ENCODE measurements at regions of chr20 and their contacts with region 1.

Region 1: GRCh38 chr20:58980700-58981627 is at the start of gene NELFCD:
- DNase-seq: peak; percentile 92
- H3K4me3 ChIP-seq: peak within 1 kb of the TSS; percentile 50 to 91 (median 79)
- H3K27ac ChIP-seq: peak within 1 kb of the TSS; percentile 80 to 88 (median 82)
- H3K4me1 ChIP-seq: peaks cover 0 to 38% (median 32%) of the 10 kb centered on the region in 4 donors
- H3K27me3 ChIP-seq: no peaks in the 10 kb centered on the region
- CTCF ChIP-seq: no peak
- EP300 ChIP-seq: no peak
- POLR2A ChIP-seq: peak in 1 of 2 donors; percentile 13
- total RNA-seq, gene NELFCD: 36.3 to 53.2 (median 43.7) TPM

Region 2: GRCh38 chr20:58790454-58790853 is 190.5 kb before region 1 on chr20:
- intact Hi-C with region 1: no loop called
- DNase-seq: no peak
- H3K4me3 ChIP-seq: no peak overlapping the region
- H3K27ac ChIP-seq: no peak overlapping the region
- H3K4me1 ChIP-seq: no peaks in the 10 kb centered on the region
- H3K27me3 ChIP-seq: peaks cover 0 to 21% (median 0%) of the 10 kb centered on the region in 3 donors
- CTCF ChIP-seq: no peak
- EP300 ChIP-seq: no peak
- POLR2A ChIP-seq: no peak

Region 3: DNA sequence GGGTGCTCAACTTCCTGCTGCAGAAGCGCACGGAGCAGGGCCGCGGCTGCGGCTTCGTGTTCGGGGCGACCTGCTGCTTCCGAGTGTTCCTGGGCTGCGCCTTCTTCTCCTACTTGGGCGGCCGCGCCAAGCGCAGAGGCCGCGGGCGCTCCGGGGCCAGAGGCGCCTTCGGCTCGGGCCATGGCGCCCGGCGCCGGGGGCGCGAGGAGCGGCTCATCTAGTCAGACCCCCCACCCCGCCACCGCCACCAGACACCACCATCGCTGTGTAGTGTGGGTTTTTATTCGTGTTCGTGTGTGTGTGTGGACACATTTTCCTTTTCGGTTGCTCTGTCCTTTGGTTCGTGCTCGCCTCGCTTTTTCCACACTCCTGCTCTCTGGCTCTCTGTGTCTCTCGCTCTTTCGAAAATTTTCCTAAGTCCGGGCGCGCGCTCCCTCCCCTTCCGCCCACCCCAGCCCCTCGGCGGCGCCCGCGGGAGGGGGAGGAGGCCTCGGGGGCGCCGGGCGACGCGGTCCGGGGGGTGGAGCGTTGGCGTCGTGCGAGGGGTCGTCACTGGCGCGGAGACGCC is 90.4 kb before region 1 on chr20:
- intact Hi-C with region 1: loop called (anchors 2 kb)
- DNase-seq: peak; percentile 92
- H3K4me3 ChIP-seq: peak overlapping the region; percentile 40 to 93 (median 87)
- H3K27ac ChIP-seq: peak overlapping the region; percentile 98 to 100 (median 99)
- H3K4me1 ChIP-seq: peaks cover 0 to 40% (median 32%) of the 10 kb centered on the region in 4 donors
- H3K27me3 ChIP-seq: no peaks in the 10 kb centered on the region
- CTCF ChIP-seq: no peak
- EP300 ChIP-seq: no peak
- POLR2A ChIP-seq: peak in 1 of 2 donors; percentile 36

Region 4: GRCh38 chr20:58907399-58908137 is 73.4 kb before region 1 on chr20:
- intact Hi-C with region 1: loop called (anchors 2 kb)
- DNase-seq: peak; percentile 97
- H3K4me3 ChIP-seq: peak overlapping the region in 2 of 4 donors; percentile 19 to 24
- H3K27ac ChIP-seq: peak overlapping the region; percentile 72 to 82 (median 79)
- H3K4me1 ChIP-seq: peaks cover 0 to 48% (median 36%) of the 10 kb centered on the region in 4 donors
- H3K27me3 ChIP-seq: no peaks in the 10 kb centered on the region
- CTCF ChIP-seq: no peak
- EP300 ChIP-seq: peak in 2 of 4 donors; percentile 60 to 78
- POLR2A ChIP-seq: no peak

Region 5: DNA sequence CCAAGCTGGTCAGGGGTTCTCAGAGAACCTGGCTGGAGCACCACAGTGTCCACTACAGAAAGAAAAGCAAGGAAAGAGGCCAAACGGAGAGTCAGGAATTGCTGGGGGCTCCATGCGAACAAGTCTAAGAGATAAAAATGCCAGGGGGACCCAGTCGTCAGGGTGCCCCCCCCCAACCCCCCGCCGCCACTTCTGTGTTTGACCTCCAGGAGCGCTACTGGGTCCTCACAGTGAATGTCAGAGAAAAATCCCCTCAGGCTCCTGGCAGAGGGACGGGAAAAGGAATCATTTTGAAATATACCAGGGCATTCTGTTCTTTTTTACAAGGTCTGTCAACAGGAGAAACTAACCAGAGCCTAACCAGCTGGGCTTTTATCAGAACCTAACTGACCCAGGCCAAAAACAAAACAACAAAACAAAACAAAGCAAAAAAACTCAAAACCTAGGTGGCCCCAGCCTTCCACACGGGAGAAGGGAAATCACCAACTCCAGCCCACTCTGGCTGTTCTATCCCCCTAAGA is 17.8 kb before region 1 on chr20:
- intact Hi-C with region 1: loop called (anchors 2 kb)
- DNase-seq: no peak
- H3K4me3 ChIP-seq: peak overlapping the region in 1 of 4 donors; percentile 10
- H3K27ac ChIP-seq: peak overlapping the region in 3 of 4 donors; percentile 66 to 75 (median 67)
- H3K4me1 ChIP-seq: peaks cover 0 to 18% (median 4%) of the 10 kb centered on the region in 4 donors
- H3K27me3 ChIP-seq: no peaks in the 10 kb centered on the region
- CTCF ChIP-seq: peak in 2 of 4 experiments; percentile 13 to 37
- EP300 ChIP-seq: peak; percentile 25 to 85 (median 41)
- POLR2A ChIP-seq: no peak

Region 6: DNA sequence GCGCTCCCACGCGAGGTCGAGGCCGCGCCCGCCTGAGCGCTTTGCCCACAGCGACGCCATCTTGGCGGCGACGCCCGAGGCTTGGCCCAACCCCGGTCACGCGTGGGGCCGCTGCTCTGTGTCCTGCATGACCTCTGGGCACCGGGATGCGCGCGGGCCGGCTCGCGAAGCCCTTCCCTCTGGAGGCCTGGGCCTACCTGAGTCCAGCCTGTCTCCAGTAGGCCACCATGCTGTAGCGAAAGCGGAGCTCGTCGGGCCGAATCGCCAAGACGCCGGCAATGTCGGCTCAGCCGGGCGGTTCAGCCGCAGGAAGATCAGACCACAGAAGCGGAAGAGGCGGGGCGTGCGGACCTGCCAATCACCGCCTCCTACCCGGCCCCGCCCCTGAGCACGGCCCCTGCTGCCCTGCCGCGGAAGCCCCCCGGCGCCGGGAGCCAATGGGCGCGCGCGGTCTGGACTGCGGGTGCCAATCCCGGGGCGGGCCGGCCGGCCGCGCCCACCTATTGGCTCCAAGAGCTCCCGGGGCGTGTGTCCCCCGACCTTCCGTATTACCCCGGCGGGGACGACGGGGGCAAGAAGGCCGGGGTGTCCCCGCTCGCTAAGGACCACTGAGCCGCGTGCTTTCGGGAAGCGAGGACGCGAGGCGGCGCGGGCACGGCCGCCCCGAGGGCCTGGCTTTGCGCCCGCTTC is 51.2 kb after region 1 on chr20 and contains the start of gene ATP5F1E:
- intact Hi-C with region 1: loop called (anchors 5 kb)
- DNase-seq: peak; percentile 98
- H3K4me3 ChIP-seq: peak within 1 kb of the TSS; percentile 77 to 88 (median 82)
- H3K27ac ChIP-seq: peak within 1 kb of the TSS; percentile 88 to 94 (median 92)
- H3K4me1 ChIP-seq: peaks cover 0 to 51% (median 48%) of the 10 kb centered on the region in 4 donors
- H3K27me3 ChIP-seq: no peaks in the 10 kb centered on the region
- CTCF ChIP-seq: no peak
- EP300 ChIP-seq: no peak
- POLR2A ChIP-seq: peak; percentile 73 to 82
- total RNA-seq, gene ATP5F1E: 28.5 to 57.4 (median 40.1) TPM

Region 7: DNA sequence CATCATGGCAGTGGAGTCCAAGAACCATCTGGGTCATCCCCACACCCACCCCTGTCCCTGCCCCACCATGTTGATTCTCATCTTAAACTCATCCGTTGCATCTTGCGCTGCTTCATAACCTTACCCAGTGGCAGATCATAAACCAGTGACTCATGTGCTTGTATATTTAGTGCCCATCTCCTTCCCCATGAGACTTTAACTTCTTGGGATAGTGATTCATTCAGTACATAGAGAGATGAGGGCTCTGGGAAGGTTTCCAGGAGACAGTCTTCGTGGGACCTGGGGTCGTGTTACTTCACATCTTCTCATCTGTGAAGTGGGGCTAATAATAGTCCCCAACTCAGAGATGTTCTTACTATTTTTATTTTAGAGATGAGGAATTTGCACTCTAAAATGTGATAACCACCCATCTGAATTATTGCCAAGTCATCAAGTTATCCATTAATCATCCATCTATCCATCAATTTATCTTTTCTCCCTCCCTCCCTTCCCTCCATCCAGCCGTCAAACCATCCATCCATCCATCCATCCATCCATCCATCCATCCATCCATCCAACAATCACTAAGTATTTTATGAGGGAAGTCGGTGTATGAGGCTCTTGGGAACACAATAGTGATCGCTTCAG is 370.6 kb after region 1 on chr20:
- intact Hi-C with region 1: no loop called
- DNase-seq: no peak
- H3K4me3 ChIP-seq: no peak overlapping the region
- H3K27ac ChIP-seq: no peak overlapping the region
- H3K4me1 ChIP-seq: peaks cover 0 to 7% (median 6%) of the 10 kb centered on the region in 4 donors
- H3K27me3 ChIP-seq: peaks cover 0 to 1% (median 0%) of the 10 kb centered on the region in 3 donors
- CTCF ChIP-seq: no peak
- EP300 ChIP-seq: no peak
- POLR2A ChIP-seq: no peak